Vagina (tissue), 2 donors: ENCODE measurements at regions of chr11 and their contacts with region 1.

Region 1: DNA sequence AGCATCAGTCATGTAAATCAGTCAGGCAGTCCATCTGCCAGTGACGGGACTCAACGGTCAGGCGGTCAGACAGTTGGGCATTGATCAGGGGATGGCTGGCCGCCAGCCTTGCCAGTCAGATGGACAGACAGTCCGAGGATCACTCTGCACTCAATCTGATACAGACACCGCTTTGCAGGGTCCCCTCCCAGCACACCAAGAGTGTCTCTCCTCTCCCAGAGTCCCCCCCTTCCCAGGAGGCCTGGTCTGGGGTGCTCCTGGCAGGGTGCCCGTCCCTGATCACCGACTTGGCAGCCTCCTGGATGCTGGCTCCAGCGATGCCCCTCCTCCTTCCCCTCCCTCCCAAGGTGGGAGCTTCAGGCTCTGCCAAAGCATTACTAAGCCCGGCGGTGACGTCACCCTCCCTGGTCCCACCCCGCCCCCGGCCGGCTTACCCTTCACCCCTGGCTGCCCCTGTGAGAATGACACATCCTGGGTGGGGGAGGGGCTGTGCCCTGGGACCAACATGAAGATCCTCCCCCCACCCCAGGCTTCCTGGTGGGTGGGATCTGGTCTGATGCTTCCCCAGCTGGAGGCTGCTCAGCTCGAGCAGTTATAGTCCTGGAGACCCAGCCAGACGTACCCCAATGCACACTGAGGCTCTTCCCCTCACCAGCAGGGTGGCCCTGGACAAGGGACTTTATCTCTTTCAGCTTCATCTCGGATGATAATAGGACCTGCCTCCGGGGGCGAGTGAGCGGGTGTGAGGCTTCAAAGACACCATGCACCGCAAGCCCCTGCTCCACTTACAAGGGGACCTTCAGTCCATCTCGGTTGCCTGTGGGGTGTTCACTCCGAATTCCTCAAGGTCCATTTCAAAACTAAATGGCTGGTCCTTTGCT is 69.2 kb downstream of the CD82 start:
- DNase-seq: peak in 1 of 2 donors; percentile 81
- H3K4me3 ChIP-seq: peak overlapping the region in 1 of 2 donors; percentile 4
- H3K27ac ChIP-seq: no peak overlapping the region
- H3K4me1 ChIP-seq: peaks cover 12% of the 10 kb centered on the region
- H3K27me3 ChIP-seq: no peaks in the 10 kb centered on the region
- CTCF ChIP-seq: no peak
- POLR2A ChIP-seq: no peak

Region 2: DNA sequence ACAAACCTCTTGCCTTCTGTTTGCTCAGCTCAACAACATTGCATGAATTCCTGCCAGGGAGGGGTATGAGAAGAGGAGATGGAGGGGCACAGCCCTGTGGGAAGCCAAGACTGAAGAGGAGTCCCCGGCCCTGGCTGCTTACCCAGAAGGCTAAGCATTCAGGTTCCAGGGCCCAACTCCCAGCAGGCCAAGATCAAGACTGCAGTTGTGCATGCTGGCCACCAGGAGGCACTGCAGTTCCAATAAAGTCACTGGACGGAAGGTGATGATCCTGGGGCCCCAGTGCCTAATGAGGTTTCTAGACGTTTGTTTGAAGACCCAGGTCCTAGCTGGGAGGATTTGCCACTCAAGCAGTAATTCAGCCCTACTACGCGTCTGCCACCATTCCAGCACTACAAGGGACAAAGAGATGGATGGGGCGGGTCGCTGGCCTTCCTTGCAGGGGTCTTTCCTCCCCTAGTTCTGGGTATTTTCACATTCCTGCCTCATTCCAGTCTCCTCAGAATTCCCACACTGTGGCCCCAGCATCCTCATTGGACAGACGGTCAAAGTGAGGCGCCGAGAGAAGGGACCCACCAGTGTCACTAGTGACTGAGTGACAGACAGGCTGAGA is 348.3 kb before region 1 on chr11:
- intact Hi-C with region 1: no loop called
- DNase-seq: no peak
- H3K4me3 ChIP-seq: no peak overlapping the region
- H3K27ac ChIP-seq: no peak overlapping the region
- H3K4me1 ChIP-seq: no peaks in the 10 kb centered on the region
- H3K27me3 ChIP-seq: no peaks in the 10 kb centered on the region
- CTCF ChIP-seq: peak; percentile 73 to 90 (median 89)
- POLR2A ChIP-seq: no peak

Region 3: GRCh38 chr11:44645827-44646226 is 11.2 kb after region 1 on chr11:
- intact Hi-C with region 1: loop called (anchors 1 kb)
- DNase-seq: no peak
- H3K4me3 ChIP-seq: no peak overlapping the region
- H3K27ac ChIP-seq: no peak overlapping the region
- H3K4me1 ChIP-seq: no peaks in the 10 kb centered on the region
- H3K27me3 ChIP-seq: no peaks in the 10 kb centered on the region
- CTCF ChIP-seq: no peak
- POLR2A ChIP-seq: no peak